Posterior cingulate gyrus (tissue), 11 donors: ENCODE measurements at regions of chr1 and their contacts with region 1.

Region 1: DNA sequence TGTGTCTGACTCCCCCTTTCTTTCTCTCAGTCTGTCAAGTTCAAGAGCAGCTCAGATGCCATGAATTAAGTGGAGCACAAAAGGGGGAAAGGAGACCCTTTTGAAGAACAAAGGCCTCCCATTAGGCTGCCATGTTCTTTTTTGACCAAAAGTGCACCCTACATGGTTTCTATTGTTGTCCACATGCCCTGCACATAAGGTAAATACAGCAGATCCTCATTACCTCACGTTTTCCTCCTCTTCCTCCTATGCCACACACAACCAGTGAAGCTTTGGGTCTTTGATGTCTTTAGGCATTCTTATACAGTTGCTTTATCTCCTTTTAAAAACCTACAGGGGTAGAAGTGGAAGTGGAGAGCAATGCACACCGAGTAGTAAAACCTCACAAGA is 47.7 kb downstream of the POU2F1 start:
- DNase-seq: no peak

Region 2: GRCh38 chr1:167109125-167109524 is 159.3 kb before region 1 on chr1:
- intact Hi-C with region 1: no loop called
- DNase-seq: no peak

Region 3: DNA sequence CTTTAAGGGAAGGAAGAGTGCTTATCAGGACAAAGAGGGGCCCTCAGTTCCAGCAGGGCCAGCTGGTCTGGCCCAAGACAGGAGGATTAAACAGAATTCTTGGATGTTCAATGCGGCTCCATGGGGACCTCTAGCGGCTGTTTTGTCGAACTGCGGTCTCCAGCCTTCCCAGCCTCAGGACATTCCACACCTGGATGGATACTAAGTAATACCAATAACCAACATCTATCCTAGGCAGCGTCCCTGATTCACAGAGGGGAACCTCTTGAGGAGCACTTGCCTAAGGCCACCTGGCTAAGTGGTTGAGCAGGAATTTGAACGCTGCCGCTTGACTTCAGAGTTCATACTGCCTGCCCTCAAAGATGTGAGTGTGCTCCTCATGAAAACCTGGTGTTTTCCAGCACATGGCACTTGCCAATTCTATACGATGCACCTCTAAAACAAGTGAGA is 265.5 kb after region 1 on chr1:
- intact Hi-C with region 1: loop called (anchors 2 kb)
- DNase-seq: peak in 9 of 10 donors; percentile 59 to 95 (median 74)